ENCODE measurements at regions of chr1 and their contacts with region 1.

Region 1: GRCh38 chr1:44730741-44731512 is at the start of gene RNU5D-1:
- DNase-seq: peak; percentile 86 to 96 (median 94)
- ATAC-seq: peak; percentile 75
- H3K4me3 ChIP-seq: peak within 1 kb of the TSS; percentile 36 to 47
- H3K4me3 Mint-ChIP-seq: peak within 1 kb of the TSS; percentile 84
- H3K27ac ChIP-seq: peak within 1 kb of the TSS; percentile 98 to 99
- H3K27ac Mint-ChIP-seq: peak within 1 kb of the TSS; percentile 100
- H3K4me1 ChIP-seq: peaks cover 14% of the 10 kb centered on the region
- H3K4me1 Mint-ChIP-seq: peaks cover 36% of the 10 kb centered on the region
- H3K27me3 ChIP-seq: no peaks in the 10 kb centered on the region
- H3K27me3 Mint-ChIP-seq: no peaks in the 10 kb centered on the region
- CTCF ChIP-seq: peak; percentile 93
- total RNA-seq, gene RNU5D-1: not detected

Region 2: DNA sequence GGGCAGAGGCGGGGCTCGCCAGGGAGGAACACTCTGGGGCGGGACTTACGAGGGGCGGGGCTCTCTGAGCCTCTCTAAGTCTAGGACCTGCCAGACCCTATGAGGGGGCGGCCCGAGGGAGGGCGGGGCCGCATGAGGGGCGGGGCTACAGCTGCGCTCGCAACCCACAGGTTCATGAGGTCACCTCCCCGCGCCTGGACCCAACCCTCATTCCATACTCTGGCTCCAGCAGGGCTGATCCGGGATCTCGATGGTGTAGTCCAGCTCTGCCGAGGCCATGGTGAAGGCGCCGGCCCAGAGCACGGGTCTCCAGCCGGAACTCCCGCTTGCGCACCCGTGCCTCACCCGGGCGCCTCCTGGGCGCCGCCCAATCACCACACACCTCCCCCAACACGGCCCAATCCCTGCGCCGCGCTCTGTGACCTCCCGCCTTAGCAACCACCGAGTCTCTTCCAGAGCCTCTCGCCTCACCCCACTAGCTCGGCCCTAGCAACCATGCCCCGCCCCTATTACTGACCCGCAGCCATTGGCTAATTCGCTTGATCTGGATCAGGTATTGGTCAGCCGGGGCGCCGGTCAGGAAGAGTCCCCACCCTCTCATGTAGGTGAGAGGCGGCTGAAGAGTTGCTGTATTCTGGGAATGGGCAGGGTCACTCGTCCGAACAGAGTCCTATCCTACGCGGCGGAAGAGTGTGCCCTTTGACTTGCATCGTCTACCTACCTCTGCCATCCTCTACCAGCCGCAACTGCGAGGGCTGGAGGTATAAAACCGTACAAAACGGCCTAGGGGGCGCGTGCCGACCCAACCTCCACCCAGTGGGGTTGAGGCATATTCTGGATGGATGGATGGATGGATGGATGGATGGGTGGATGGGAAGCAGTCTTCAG is 56.6 kb before region 1 on chr1 and contains the starts of genes ARMH1 and TMEM53:
- CTCF ChIA-PET with region 1: interaction called, 3 read pairs
- POLR2A ChIA-PET with region 1: no interaction called
- intact Hi-C with region 1: loop called in 1 of 2 experiments (anchors 2 kb)
- DNase-seq: peak; percentile 91 to 98 (median 96)
- ATAC-seq: peak; percentile 91
- H3K4me3 ChIP-seq: peak within 1 kb of the TSS; percentile 76 to 88
- H3K4me3 Mint-ChIP-seq: peak within 1 kb of the TSS; percentile 94
- H3K27ac ChIP-seq: peak within 1 kb of the TSS; percentile 81 to 82
- H3K27ac Mint-ChIP-seq: peak within 1 kb of the TSS; percentile 91
- H3K4me1 ChIP-seq: peaks cover 12% of the 10 kb centered on the region
- H3K4me1 Mint-ChIP-seq: peaks cover 25% of the 10 kb centered on the region
- H3K27me3 ChIP-seq: no peaks in the 10 kb centered on the region
- H3K27me3 Mint-ChIP-seq: no peaks in the 10 kb centered on the region
- CTCF ChIP-seq: no peak
- total RNA-seq, gene ARMH1: 117 to 128 TPM
- total RNA-seq, gene TMEM53: 1.2 TPM in 1 of 2 experiments, not detected in the other

Region 3: DNA sequence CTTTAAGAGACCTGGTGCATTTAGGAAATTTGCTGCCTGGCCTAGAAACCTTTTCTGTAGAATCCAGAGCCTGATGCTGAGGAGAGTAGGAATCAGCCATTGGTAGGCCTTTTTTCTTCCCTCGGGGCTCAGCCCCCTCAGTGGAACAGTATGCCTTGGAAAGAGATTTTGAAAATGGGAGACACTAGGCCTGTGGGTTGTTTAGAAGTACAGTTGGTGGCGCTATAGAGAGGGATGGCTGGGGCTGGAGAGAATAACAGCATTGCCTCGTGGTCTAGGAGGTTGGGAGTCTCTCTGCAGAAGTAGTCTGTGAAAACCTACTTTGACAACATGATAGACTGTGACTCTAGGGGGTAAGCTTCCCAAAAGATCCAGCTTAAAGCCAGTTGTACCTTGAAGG is 17.0 kb after region 1 on chr1:
- CTCF ChIA-PET with region 1: interaction called, 13 read pairs
- POLR2A ChIA-PET with region 1: interaction called, 7 read pairs
- intact Hi-C with region 1: no loop called
- DNase-seq: no peak
- ATAC-seq: no peak
- H3K4me3 ChIP-seq: no peak overlapping the region
- H3K4me3 Mint-ChIP-seq: no peak overlapping the region
- H3K27ac ChIP-seq: no peak overlapping the region
- H3K27ac Mint-ChIP-seq: no peak overlapping the region
- H3K4me1 ChIP-seq: no peaks in the 10 kb centered on the region
- H3K4me1 Mint-ChIP-seq: no peaks in the 10 kb centered on the region
- H3K27me3 ChIP-seq: no peaks in the 10 kb centered on the region
- H3K27me3 Mint-ChIP-seq: no peaks in the 10 kb centered on the region
- CTCF ChIP-seq: no peak

Region 4: GRCh38 chr1:44786138-44786840 is 55.4 kb after region 1 on chr1:
- CTCF ChIA-PET with region 1: interaction called, 45 read pairs
- POLR2A ChIA-PET with region 1: interaction called, 15 read pairs
- intact Hi-C with region 1: no loop called
- DNase-seq: peak in 8 of 9 experiments; percentile 63 to 89 (median 78)
- ATAC-seq: peak; percentile 85
- H3K4me3 ChIP-seq: peak overlapping the region; percentile 56 to 94
- H3K4me3 Mint-ChIP-seq: peak overlapping the region; percentile 82
- H3K27ac ChIP-seq: peak overlapping the region; percentile 33 to 63
- H3K27ac Mint-ChIP-seq: peak overlapping the region; percentile 86
- H3K4me1 ChIP-seq: peaks cover 34% of the 10 kb centered on the region
- H3K4me1 Mint-ChIP-seq: peaks cover 29% of the 10 kb centered on the region
- H3K27me3 ChIP-seq: no peaks in the 10 kb centered on the region
- H3K27me3 Mint-ChIP-seq: no peaks in the 10 kb centered on the region
- CTCF ChIP-seq: peak; percentile 100

Region 5: DNA sequence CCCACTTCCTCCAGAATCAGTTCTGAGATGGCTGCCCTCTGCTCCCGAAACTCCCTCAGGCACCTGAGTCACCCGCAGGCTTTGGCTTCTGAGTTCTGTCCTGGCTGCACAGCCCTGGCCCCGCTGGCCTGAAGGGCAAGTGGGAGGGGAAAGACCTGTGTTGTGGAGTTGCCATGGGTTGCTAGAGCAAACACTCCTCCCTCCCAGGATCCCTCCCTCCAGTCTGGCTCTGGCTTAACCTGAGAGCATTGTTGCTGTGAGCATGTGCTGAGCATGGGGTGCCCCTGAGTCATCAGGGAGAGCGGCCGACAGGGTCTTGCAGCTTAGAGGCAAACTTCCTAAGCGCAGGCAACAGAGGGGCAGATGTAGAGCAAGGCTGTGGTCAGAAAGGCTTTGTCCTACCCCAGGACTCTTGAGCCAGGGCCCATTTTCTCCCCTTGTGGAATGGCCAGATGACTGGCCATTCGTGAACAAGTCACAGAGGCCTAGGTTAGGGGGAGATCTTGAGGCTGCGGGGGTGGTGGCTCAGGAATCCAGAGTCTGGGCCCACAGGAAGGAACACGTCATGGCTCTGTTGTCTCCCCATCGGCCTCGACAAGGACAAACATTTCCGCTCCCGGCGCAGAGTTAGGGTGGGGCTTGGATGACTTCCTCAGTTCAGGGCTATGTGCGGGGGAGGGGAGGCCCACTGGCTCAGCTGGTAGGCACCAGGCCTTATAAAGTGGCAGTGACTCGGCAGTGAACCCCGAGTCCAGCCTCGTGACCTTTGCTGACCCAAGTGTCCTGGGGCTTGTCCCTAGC is 76.5 kb after region 1 on chr1 and contains the start of gene DYNLT4:
- CTCF ChIA-PET with region 1: interaction called, 10 read pairs
- POLR2A ChIA-PET with region 1: interaction called, 11 read pairs
- intact Hi-C with region 1: no loop called
- DNase-seq: peak; percentile 83 to 98 (median 93)
- ATAC-seq: peak; percentile 58
- H3K4me3 ChIP-seq: peak within 1 kb of the TSS in 1 of 2 experiments; percentile 35
- H3K4me3 Mint-ChIP-seq: peak within 1 kb of the TSS; percentile 60
- H3K27ac ChIP-seq: peak within 1 kb of the TSS; percentile 93 to 96
- H3K27ac Mint-ChIP-seq: peak within 1 kb of the TSS; percentile 99
- H3K4me1 ChIP-seq: peaks cover 70% of the 10 kb centered on the region
- H3K4me1 Mint-ChIP-seq: peaks cover 78% of the 10 kb centered on the region
- H3K27me3 ChIP-seq: no peaks in the 10 kb centered on the region
- H3K27me3 Mint-ChIP-seq: no peaks in the 10 kb centered on the region
- CTCF ChIP-seq: no peak
- total RNA-seq, gene DYNLT4: 2.2 to 2.5 TPM

Region 6: DNA sequence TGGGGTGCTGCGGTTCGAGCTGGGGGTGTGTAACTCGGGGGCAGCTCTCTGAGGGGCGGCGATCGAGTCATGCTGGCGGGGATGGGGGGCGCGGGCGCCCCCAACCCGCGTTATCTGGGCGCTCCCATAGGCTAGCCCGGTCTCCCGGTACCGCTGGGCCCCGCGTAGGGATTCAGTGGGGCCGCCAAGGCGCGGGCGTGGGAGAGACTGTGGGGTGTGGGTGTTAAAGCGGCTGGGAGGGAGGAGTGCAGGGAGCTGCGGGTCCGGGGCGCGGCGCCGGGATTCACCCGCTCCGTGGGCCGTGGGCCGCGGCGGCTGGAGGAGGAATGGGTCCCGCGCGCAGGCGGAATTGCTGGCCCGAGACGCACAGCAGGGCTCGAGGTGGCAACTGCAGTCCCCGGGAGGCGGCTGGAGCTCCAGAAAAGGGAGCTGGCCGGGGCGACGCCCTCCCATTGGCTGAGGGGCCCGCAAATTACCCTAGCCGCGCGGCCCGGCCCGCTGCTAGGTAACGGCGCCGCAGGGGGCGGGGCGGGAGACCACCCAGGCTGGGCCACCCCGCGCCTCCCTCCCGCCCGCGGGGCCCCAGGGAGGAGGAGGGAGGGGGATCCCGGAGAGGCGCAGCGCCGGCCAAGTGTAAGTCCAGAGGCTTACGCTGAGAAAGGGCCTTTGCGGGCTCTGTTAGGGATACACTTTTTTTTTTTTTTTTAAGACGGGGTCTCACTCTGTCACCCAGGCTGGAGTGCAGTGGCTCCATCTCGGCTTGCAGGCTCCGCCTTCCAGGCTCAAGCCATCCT is 112.1 kb after region 1 on chr1 and contains the start of gene PTCH2:
- CTCF ChIA-PET with region 1: interaction called, 11 read pairs
- POLR2A ChIA-PET with region 1: no interaction called
- intact Hi-C with region 1: no loop called
- DNase-seq: peak in 7 of 9 experiments; percentile 18 to 64 (median 54)
- ATAC-seq: peak; percentile 74
- H3K4me3 ChIP-seq: peak within 1 kb of the TSS; percentile 35 to 43
- H3K4me3 Mint-ChIP-seq: peak within 1 kb of the TSS; percentile 73
- H3K27ac ChIP-seq: no peak within 1 kb of the TSS
- H3K27ac Mint-ChIP-seq: no peak within 1 kb of the TSS
- H3K4me1 ChIP-seq: peaks cover 4% of the 10 kb centered on the region
- H3K4me1 Mint-ChIP-seq: peaks cover 4% of the 10 kb centered on the region
- H3K27me3 ChIP-seq: no peaks in the 10 kb centered on the region
- H3K27me3 Mint-ChIP-seq: peaks cover 7% of the 10 kb centered on the region
- CTCF ChIP-seq: no peak
- total RNA-seq, gene PTCH2: 1.3 to 1.7 TPM

Region 7: DNA sequence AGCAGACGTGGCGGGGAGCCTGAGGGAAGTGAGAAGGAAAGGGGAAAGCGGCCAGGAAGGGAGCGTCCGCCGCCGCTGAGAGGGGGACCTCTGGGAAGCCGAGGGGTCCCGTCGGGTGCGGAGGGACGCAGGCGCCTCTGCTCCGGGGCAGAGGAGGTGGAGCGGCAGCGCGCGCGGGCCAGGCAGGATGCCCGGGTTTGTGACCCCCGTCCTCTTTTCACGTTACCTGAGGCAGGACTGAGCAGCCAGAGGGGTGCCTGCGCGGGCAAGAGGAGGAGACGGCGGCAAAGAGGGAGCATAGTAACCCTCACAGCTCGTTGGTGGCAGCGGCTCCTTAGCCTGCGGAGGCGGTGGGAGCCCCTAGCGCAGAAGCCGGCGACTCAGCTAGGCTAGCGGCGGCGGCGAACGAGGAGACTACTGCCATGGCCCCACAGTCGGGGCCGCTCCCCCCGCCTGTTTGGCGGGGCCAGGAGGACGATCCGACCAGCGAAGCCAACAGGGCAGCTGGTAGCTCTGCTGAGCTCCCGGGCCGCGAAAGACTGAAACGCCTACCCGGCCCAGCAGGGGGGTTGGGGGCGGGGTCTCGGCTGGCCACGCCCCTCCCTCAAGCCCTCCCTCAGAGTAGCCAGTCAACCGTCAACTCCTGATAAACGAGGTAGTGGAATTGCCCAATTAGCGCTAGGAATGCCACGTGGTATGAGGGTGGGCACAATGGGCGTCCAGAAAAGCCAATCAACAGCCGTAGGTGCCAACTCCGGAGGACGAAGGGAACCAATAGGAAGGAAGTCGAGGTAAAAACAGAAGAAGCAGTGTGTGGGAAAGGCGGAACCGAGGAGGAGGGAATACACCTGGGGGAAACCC is 759.9 kb after region 1 on chr1 and contains the start of gene TESK2:
- CTCF ChIA-PET with region 1: interaction called, 5 read pairs
- POLR2A ChIA-PET with region 1: no interaction called
- intact Hi-C with region 1: loop called (anchors 5 kb)
- DNase-seq: peak; percentile 94 to 100 (median 95)
- ATAC-seq: peak; percentile 91
- H3K4me3 ChIP-seq: peak within 1 kb of the TSS; percentile 74 to 91
- H3K4me3 Mint-ChIP-seq: no peak within 1 kb of the TSS
- H3K27ac ChIP-seq: peak within 1 kb of the TSS; percentile 49 to 72
- H3K27ac Mint-ChIP-seq: no peak within 1 kb of the TSS
- H3K4me1 ChIP-seq: peaks cover 11% of the 10 kb centered on the region
- H3K4me1 Mint-ChIP-seq: peaks cover 16% of the 10 kb centered on the region
- H3K27me3 ChIP-seq: peaks cover 0 to 3% of the 10 kb centered on the region in 2 experiments
- H3K27me3 Mint-ChIP-seq: no peaks in the 10 kb centered on the region
- CTCF ChIP-seq: no peak
- total RNA-seq, gene TESK2: 4.6 to 5.8 TPM